ENCODE measurements at regions of chr9 and their contacts with region 1.

Region 1: DNA sequence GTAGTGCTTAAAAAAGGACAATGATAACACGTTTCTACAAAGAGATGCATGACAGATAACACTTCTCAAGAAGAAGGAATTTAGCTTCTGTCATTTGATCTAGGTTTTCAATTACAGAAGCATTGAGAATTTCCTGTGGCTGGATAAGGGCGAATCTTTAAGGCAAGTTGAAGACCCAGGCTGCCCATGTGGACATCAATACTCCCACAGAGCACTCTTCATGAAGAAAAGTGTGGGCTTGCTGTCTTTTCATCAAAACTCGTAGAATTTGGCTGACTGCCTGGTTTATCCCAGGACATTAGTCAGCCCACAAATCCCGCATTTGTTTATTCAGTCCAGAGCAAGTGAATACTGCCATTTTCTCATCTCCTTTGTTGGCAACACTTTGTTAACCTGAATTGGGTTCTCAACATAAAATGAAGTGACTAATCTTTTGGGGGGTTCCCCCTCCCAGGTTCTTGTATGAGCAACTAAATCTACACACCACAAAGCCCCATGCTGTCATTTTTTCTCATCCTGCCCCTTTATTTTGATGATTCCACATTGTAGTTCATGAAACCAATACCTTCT is 43.4 kb upstream of the CDKN2B start:
- DNase-seq: no peak
- ATAC-seq: peak; percentile 74
- H3K4me3 Mint-ChIP-seq: peak overlapping the region; percentile 59
- H3K27ac Mint-ChIP-seq: peak overlapping the region; percentile 90
- H3K4me1 Mint-ChIP-seq: peaks cover 64% of the 10 kb centered on the region
- H3K27me3 Mint-ChIP-seq: no peaks in the 10 kb centered on the region

Region 2: GRCh38 chr9:21995177-21996086 is 57.0 kb before region 1 on chr9:
- POLR2A ChIA-PET with region 1: interaction called, 10 read pairs
- DNase-seq: peak; percentile 85
- ATAC-seq: peak; percentile 79
- H3K4me3 Mint-ChIP-seq: peak overlapping the region; percentile 99
- H3K27ac Mint-ChIP-seq: peak overlapping the region; percentile 95
- H3K4me1 Mint-ChIP-seq: peaks cover 27% of the 10 kb centered on the region
- H3K27me3 Mint-ChIP-seq: peaks cover 36% of the 10 kb centered on the region

Region 3: GRCh38 chr9:22065431-22066200 is 13.2 kb after region 1 on chr9:
- POLR2A ChIA-PET with region 1: interaction called, 10 read pairs
- DNase-seq: no peak
- ATAC-seq: peak; percentile 77
- H3K4me3 Mint-ChIP-seq: peak overlapping the region; percentile 65
- H3K27ac Mint-ChIP-seq: peak overlapping the region; percentile 86
- H3K4me1 Mint-ChIP-seq: peaks cover 53% of the 10 kb centered on the region
- H3K27me3 Mint-ChIP-seq: no peaks in the 10 kb centered on the region

Region 4: GRCh38 chr9:22073349-22073748 is 20.9 kb after region 1 on chr9:
- POLR2A ChIA-PET with region 1: interaction called, 10 read pairs
- DNase-seq: no peak
- ATAC-seq: peak; percentile 94
- H3K4me3 Mint-ChIP-seq: peak overlapping the region; percentile 64
- H3K27ac Mint-ChIP-seq: peak overlapping the region; percentile 86
- H3K4me1 Mint-ChIP-seq: peaks cover 60% of the 10 kb centered on the region
- H3K27me3 Mint-ChIP-seq: no peaks in the 10 kb centered on the region

Region 5: DNA sequence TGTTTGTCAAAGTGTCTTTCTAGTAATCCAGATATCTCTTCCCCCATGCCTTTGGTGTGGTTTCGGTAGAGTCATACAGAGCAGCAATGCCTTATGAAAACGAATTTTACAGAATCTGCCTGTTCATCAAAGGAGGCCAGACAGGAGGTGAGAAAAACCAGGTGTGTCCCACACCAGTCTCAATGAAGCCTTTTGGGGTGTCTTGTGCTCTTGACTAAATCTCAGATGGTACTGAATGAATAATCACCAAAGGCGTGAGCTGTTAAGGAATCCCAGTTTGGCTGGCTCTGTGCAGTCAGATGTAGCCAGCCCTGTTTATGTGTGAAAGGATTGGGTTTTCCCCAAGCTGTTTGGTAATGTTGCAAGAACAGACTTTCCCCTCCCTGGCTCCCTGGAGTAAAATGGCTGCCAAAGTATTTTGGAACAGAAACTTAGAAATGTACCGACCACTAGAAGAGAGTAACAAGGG is 27.4 kb after region 1 on chr9:
- POLR2A ChIA-PET with region 1: interaction called, 17 read pairs
- DNase-seq: peak; percentile 42
- ATAC-seq: peak; percentile 95
- H3K4me3 Mint-ChIP-seq: peak overlapping the region; percentile 71
- H3K27ac Mint-ChIP-seq: peak overlapping the region; percentile 98
- H3K4me1 Mint-ChIP-seq: peaks cover 55% of the 10 kb centered on the region
- H3K27me3 Mint-ChIP-seq: no peaks in the 10 kb centered on the region